Activated T-helper 2 cell treated with anti-CD3 and anti-CD28 coated beads, Interferon-gamma antibody, Interleukin-2, Interleukin-4, amounts not matched to agents 10 μg/mL and 5 μg/mL and 100 μg/mL, durations not matched to agents 14 hours and 24 hours and 36 hours (primary cell): ENCODE measurements at regions of chr4 and their contacts with region 1.

Region 1: GRCh38 chr4:26860157-26860921 is at the start of gene STIM2:
- DNase-seq: peak; percentile 99
- H3K4me3 Mint-ChIP-seq: peak within 1 kb of the TSS; percentile 93
- H3K27ac Mint-ChIP-seq: peak within 1 kb of the TSS; percentile 95
- H3K4me1 Mint-ChIP-seq: peaks cover 52% of the 10 kb centered on the region
- H3K27me3 Mint-ChIP-seq: peaks cover 4% of the 10 kb centered on the region
- total RNA-seq, gene STIM2: 35.5 and 37.1 TPM in 2 replicates

Region 2: DNA sequence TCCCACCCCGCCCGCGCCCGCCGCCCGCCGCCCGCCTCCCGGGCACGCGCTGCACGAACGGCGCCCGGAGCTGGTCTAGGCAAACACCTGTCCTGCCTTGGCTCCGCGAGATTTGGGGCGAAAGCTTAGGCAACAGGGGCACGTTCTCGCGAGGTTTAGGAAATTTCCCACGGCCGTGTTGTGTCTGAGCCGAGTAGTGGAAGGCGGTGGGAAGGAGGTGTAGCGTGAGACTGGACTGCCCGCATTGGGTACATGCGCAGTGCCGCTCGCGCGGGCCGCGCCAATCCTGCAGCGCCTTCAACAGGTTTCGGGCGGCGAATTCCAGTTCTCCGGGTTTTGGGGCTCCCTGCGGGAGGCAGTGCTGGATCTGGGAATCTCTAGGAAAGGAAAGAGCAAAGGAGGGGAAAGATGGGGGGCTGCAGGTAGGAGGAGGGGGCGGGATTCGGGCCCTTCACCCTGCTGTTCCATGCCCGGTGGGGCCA is 540.8 kb before region 1 on chr4:
- intact Hi-C with region 1: loop called (anchors 1 kb)
- DNase-seq: peak; percentile 99
- H3K4me3 Mint-ChIP-seq: peak overlapping the region; percentile 97
- H3K27ac Mint-ChIP-seq: peak overlapping the region; percentile 100
- H3K4me1 Mint-ChIP-seq: peaks cover 29% of the 10 kb centered on the region
- H3K27me3 Mint-ChIP-seq: no peaks in the 10 kb centered on the region

Region 3: DNA sequence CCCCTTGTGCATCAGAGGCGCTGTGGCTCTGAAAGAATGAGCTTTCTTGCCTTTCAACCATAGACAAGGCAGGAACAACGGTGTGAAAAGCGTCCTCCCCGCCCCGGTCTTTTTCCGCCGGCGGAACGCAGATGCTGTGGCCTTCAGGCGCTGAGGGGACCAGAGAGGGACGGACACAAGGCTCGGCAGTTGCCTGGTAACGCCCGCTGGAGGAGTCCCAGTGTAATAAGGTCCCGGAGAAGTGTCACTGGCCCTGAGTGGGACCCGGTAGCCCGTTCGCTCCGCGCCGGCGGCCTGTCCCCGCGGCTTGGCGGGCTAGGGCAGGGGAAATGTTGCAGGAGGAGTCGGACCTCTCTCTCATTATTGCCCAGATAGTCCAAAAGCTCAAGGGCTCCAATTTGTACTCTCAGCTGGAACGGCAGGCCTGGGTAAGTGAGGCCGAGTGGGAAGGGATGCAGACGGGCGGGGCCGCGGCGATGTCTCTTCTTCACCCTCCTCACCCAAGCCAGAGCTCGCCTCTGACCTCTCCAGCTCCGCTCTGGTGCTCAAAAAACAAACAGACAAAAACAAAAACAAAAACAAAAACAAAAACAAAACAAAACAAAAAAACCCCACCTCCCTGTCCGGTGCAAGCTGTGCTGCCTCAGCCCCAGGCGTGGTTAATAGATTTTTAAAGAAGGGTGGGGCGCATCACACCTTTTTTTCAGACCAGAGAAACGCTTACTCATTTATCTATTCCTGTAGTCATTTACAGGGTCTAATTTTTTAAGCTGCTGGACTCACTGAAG is 276.3 kb before region 1 on chr4 and contains the start of gene TBC1D19:
- intact Hi-C with region 1: loop called (anchors 2 kb)
- DNase-seq: peak; percentile 86
- H3K4me3 Mint-ChIP-seq: peak within 1 kb of the TSS; percentile 93
- H3K27ac Mint-ChIP-seq: peak within 1 kb of the TSS; percentile 79
- H3K4me1 Mint-ChIP-seq: peaks cover 25% of the 10 kb centered on the region
- H3K27me3 Mint-ChIP-seq: no peaks in the 10 kb centered on the region
- total RNA-seq, gene TBC1D19: 4.5 TPM in 2 replicates

Region 4: GRCh38 chr4:26787461-26788340 is 72.6 kb before region 1 on chr4:
- intact Hi-C with region 1: no loop called
- DNase-seq: no peak
- H3K4me3 Mint-ChIP-seq: no peak overlapping the region
- H3K27ac Mint-ChIP-seq: no peak overlapping the region
- H3K4me1 Mint-ChIP-seq: peaks cover 12% of the 10 kb centered on the region
- H3K27me3 Mint-ChIP-seq: no peaks in the 10 kb centered on the region

Region 5: GRCh38 chr4:26873391-26874026 is 13.2 kb after region 1 on chr4:
- intact Hi-C with region 1: loop called (anchors 1 kb)
- DNase-seq: peak; percentile 43
- H3K4me3 Mint-ChIP-seq: no peak overlapping the region
- H3K27ac Mint-ChIP-seq: peak overlapping the region; percentile 70
- H3K4me1 Mint-ChIP-seq: peaks cover 57% of the 10 kb centered on the region
- H3K27me3 Mint-ChIP-seq: no peaks in the 10 kb centered on the region

Region 6: DNA sequence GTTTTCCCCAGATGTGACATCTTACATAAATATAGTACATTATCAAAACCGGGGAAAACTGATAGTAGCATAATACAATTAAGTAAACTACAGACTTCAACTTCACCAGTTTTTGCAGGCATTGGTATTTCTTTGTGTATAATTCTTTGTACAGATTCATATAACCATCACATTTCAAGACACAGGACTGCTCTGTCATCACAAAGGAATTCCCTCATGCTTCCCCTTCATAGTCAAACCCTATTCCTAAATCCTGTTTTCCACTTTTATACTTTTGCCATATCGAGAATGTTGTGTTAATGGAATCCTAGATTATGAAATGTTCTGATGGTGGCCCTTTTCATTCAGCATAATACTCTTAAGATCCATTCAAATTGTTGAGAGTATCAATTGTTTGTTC is 36.3 kb after region 1 on chr4:
- intact Hi-C with region 1: loop called (anchors 5 kb)
- DNase-seq: no peak
- H3K4me3 Mint-ChIP-seq: no peak overlapping the region
- H3K27ac Mint-ChIP-seq: no peak overlapping the region
- H3K4me1 Mint-ChIP-seq: peaks cover 33% of the 10 kb centered on the region
- H3K27me3 Mint-ChIP-seq: no peaks in the 10 kb centered on the region